Left ventricle myocardium superior (tissue), 1 donor: ENCODE measurements at regions of chr16 and their contacts with region 1.

Region 1: DNA sequence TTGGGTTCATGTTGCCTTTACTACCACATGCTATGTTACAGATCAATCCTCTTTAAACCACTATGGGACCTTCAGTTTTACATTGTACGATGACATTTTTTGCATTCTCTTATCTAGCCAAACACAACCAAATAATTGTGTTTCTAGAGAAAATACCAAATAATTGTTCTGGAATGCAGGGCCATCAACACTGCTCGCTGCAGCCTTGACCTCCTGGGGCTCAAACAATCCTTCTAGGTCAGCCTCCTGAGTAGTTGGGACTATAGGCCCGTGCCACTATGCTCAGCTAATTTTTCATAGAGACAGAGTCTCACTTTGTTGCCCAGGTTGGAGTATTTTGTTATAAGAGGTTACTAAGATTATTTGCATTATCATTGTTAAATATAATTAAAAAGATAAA is 237.5 kb upstream of the PMFBP1 start:
- DNase-seq: no peak
- ATAC-seq: no peak

Region 2: DNA sequence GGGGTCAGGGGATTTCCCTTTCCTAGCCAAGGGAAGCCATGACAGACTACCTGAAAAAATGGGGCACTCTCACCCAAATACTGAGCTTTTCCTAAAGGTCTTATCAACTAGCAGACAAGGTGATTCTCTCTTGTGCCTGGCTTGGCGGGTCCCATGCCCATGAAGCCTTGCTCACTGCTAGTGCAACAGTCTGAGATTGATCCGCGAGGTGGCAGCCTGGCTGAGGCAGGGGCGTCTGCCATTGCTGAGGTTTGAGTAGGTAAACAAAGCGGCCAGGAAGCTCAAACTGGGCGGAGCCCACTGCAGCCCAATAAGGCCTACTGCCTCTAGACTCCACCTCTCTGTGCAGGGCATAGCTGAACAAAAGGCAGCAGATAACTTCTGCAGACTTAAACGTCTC is 84.8 kb before region 1 on chr16:
- intact Hi-C with region 1: no loop called
- DNase-seq: no peak
- ATAC-seq: no peak

Region 3: DNA sequence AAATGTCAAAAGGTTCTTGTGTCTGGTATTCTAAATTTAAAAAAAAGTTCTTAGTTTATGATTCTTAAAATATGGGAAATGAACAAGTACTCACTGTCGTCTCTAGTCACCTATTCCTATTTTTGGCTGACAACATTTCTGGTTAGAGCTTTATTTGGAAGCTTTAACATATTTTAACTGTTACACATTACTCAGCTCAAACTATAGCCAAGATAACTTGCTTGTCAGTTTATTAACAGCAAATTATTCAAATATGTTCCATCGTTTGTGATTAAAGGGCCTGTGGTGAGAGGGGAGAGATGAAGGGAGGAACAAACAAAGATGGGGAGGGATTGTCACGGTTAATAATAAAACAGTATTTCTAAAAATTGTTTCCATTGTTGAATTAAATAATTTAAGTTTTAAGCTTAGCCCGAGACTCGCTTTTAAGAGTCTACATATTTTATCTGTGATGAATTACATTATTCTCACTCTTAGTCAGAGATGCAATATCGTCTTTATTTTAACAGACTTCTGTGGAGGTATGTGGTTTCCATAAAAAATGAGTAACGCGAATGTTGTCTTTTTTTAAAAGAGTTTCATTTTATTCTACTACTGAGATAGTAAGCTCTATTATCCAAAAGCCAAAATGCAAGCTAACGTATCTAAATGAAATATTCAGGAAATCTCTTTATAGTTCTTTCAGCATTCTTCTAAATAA is 84.4 kb after region 1 on chr16:
- intact Hi-C with region 1: no loop called
- DNase-seq: no peak
- ATAC-seq: no peak

Region 4: DNA sequence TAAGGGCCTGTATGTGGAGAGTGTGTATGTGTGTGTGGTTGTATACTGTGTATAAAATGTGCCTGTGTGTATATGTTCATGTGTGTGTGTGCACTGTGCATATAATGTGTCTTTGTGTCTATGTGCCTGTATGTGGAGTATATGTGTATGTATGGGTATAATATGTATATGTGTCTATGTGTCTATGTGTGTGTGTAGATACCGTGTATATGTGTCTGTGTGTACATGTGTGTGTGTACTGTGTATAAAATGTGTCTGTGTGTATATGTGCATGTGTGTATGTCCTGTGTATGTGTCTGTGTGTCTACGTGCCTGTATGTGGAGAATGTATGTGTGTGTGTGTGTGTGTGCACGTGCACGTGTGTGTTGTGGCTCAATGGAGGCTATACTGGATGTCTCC is 838.9 kb after region 1 on chr16:
- intact Hi-C with region 1: loop called (anchors 5 kb)
- DNase-seq: no peak
- ATAC-seq: no peak